Gastrocnemius medialis (tissue), 4 donors: ENCODE measurements at regions of chr14 and their contacts with region 1.

Region 1: GRCh38 chr14:27314231-27314630 is 716.4 kb upstream of the NOVA1 start:
- DNase-seq: no peak
- ATAC-seq: no peak
- H3K4me3 ChIP-seq: no peak overlapping the region
- H3K27ac ChIP-seq: no peak overlapping the region
- H3K4me1 ChIP-seq: no peaks in the 10 kb centered on the region
- H3K27me3 ChIP-seq: no peaks in the 10 kb centered on the region
- CTCF ChIP-seq: no peak
- POLR2A ChIP-seq: no peak

Region 2: DNA sequence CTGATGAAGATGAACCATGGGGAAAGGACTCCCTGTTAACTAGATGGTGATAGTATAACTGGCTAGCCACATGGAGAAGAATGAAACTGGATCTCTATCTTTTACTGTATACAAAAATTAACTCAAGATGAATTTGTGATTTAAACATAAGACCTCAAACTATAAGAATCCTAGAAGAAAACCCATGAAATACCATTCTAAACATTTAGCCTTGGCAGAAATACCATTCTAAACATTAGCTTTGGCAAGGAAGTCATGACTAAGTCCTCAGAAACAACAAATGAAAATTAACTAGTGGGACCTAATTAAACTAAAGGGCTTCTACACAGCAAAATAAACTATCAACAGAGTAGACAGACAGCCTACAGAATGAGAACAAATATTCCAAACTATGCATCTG is 688.0 kb before region 1 on chr14:
- in situ Hi-C with region 1: no loop called
- intact Hi-C with region 1: loop called (anchors 5 kb)
- DNase-seq: no peak
- ATAC-seq: no peak
- H3K4me3 ChIP-seq: no peak overlapping the region
- H3K27ac ChIP-seq: no peak overlapping the region
- H3K4me1 ChIP-seq: no peaks in the 10 kb centered on the region
- H3K27me3 ChIP-seq: no peaks in the 10 kb centered on the region
- CTCF ChIP-seq: no peak
- POLR2A ChIP-seq: no peak

Region 3: GRCh38 chr14:26925876-26926584 is 388.2 kb before region 1 on chr14:
- in situ Hi-C with region 1: no loop called
- intact Hi-C with region 1: no loop called
- DNase-seq: no peak
- ATAC-seq: no peak
- H3K4me3 ChIP-seq: no peak overlapping the region
- H3K27ac ChIP-seq: no peak overlapping the region
- H3K4me1 ChIP-seq: no peaks in the 10 kb centered on the region
- H3K27me3 ChIP-seq: no peaks in the 10 kb centered on the region
- CTCF ChIP-seq: no peak
- POLR2A ChIP-seq: no peak

Region 4: DNA sequence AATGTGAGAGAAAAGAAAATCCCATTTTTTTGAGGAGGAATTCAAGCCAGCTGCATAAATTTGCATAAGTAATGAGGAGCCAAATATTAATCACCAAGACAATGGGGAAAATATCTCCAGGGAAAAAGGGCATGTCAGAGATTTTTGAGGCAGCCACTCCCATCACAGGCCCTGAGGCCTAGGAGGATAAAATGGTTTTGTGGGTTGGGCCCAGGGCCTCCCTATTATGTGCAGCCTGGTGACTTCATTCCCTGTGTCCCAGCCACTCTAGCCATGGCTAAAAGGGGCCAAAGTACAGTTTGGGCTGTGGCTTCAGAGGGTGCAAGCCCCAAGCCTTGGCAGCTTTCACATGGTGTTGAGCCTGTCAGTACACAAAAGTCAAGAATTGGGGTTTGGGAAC is 401.3 kb after region 1 on chr14:
- in situ Hi-C with region 1: no loop called
- intact Hi-C with region 1: no loop called
- DNase-seq: no peak
- ATAC-seq: no peak
- H3K4me3 ChIP-seq: no peak overlapping the region
- H3K27ac ChIP-seq: no peak overlapping the region
- H3K4me1 ChIP-seq: no peaks in the 10 kb centered on the region
- H3K27me3 ChIP-seq: no peaks in the 10 kb centered on the region
- CTCF ChIP-seq: no peak
- POLR2A ChIP-seq: no peak